PC-9 (cell line): ENCODE measurements at regions of chr3 and their contacts with region 1.

Region 1: GRCh38 chr3:172388412-172389078 is 59.7 kb downstream of the GHSR start:
- DNase-seq: no peak
- H3K4me3 ChIP-seq: no peak overlapping the region
- H3K27ac ChIP-seq: no peak overlapping the region
- H3K4me1 ChIP-seq: no peaks in the 10 kb centered on the region
- H3K27me3 ChIP-seq: no peaks in the 10 kb centered on the region
- CTCF ChIP-seq: no peak

Region 2: GRCh38 chr3:172029425-172030098 is 359.0 kb before region 1 on chr3:
- CTCF ChIA-PET with region 1: interaction called, 10 read pairs
- POLR2A ChIA-PET with region 1: no interaction called
- intact Hi-C with region 1: no loop called
- DNase-seq: peak in 1 of 2 experiments; percentile 28
- H3K4me3 ChIP-seq: no peak overlapping the region
- H3K27ac ChIP-seq: no peak overlapping the region
- H3K4me1 ChIP-seq: no peaks in the 10 kb centered on the region
- H3K27me3 ChIP-seq: no peaks in the 10 kb centered on the region
- CTCF ChIP-seq: no peak